Heart left ventricle (tissue), 16 donors: ENCODE measurements at regions of chr9 and their contacts with region 1.

Region 1: GRCh38 chr9:26308328-26308727 is 584.3 kb downstream of the CAAP1 start:
- DNase-seq: no peak
- ATAC-seq: no peak
- H3K4me3 ChIP-seq: no peak overlapping the region
- H3K27ac ChIP-seq: no peak overlapping the region
- H3K4me1 ChIP-seq: no peaks in the 10 kb centered on the region
- H3K27me3 ChIP-seq: no peaks in the 10 kb centered on the region
- CTCF ChIP-seq: no peak
- POLR2A ChIP-seq: no peak

Region 2: DNA sequence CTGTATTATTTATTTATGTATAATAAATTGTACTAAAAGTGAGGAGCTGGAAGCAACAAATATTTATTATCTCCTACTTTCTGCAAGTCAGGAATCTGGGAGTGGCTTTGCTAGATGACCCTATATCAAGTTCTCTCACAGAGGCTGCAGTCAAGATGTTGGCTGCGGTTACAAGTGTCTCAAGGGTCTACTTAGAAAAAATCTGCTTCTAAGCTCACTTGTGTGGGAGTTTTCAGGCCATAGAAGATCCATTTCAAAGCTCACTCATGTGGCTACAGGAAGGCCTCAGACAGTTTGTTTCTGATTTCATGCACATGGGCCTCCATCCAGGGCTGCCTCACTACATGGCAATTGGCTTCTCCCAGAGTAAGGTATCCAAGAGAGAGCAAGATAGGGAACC is 33.2 kb after region 1 on chr9:
- intact Hi-C with region 1: loop called in 1 of 10 experiments (anchors 5 kb)
- DNase-seq: no peak
- ATAC-seq: no peak
- H3K4me3 ChIP-seq: no peak overlapping the region
- H3K27ac ChIP-seq: no peak overlapping the region
- H3K4me1 ChIP-seq: no peaks in the 10 kb centered on the region
- H3K27me3 ChIP-seq: no peaks in the 10 kb centered on the region
- CTCF ChIP-seq: no peak
- POLR2A ChIP-seq: no peak